ENCODE measurements at regions of chr18 and their contacts with region 1.

Region 1: GRCh38 chr18:9614401-9615279 is at the start of gene PPP4R1:
- DNase-seq: peak; percentile 58 to 72
- ATAC-seq: peak; percentile 85 to 87
- H3K4me3 ChIP-seq: peak within 1 kb of the TSS; percentile 66 to 86 (median 76)
- H3K27ac ChIP-seq: peak within 1 kb of the TSS; percentile 84 to 91 (median 88)
- H3K4me1 ChIP-seq: peaks cover 17 to 20% of the 10 kb centered on the region in 2 donors
- H3K27me3 ChIP-seq: no peaks in the 10 kb centered on the region
- CTCF ChIP-seq: no peak
- POLR2A ChIP-seq: peak; percentile 31 to 47
- total RNA-seq, gene PPP4R1: 27.7 to 48.3 (median 32.0) TPM

Region 2: GRCh38 chr18:9474983-9475642 is 139.5 kb before region 1 on chr18 and contains the start of gene RALBP1:
- in situ Hi-C with region 1: no loop called
- intact Hi-C with region 1: loop called (anchors 5 kb)
- DNase-seq: peak; percentile 98 to 99
- ATAC-seq: peak; percentile 94 to 95
- H3K4me3 ChIP-seq: peak within 1 kb of the TSS; percentile 72 to 94 (median 88)
- H3K27ac ChIP-seq: peak within 1 kb of the TSS; percentile 84 to 98 (median 91)
- H3K4me1 ChIP-seq: peaks cover 13 to 21% of the 10 kb centered on the region in 2 donors
- H3K27me3 ChIP-seq: no peaks in the 10 kb centered on the region
- CTCF ChIP-seq: peak in 2 of 5 experiments; percentile 23 to 36
- POLR2A ChIP-seq: peak; percentile 74 to 94
- total RNA-seq, gene RALBP1: 41.5 to 108 (median 78.1) TPM

Region 3: GRCh38 chr18:9708057-9708433 is 93.4 kb after region 1 on chr18 and contains the start of gene RAB31:
- in situ Hi-C with region 1: no loop called
- intact Hi-C with region 1: loop called (anchors 5 kb)
- DNase-seq: peak in 1 of 2 donors; percentile 54
- ATAC-seq: peak; percentile 69 to 72
- H3K4me3 ChIP-seq: peak within 1 kb of the TSS; percentile 64 to 85 (median 71)
- H3K27ac ChIP-seq: peak within 1 kb of the TSS; percentile 63 to 85 (median 72)
- H3K4me1 ChIP-seq: peaks cover 8 to 9% of the 10 kb centered on the region in 2 donors
- H3K27me3 ChIP-seq: peaks cover 18 to 21% (median 18%) of the 10 kb centered on the region in 3 donors
- CTCF ChIP-seq: no peak
- POLR2A ChIP-seq: peak; percentile 44 to 58
- total RNA-seq, gene RAB31: 3.2 to 7.1 (median 4.4) TPM

Region 4: DNA sequence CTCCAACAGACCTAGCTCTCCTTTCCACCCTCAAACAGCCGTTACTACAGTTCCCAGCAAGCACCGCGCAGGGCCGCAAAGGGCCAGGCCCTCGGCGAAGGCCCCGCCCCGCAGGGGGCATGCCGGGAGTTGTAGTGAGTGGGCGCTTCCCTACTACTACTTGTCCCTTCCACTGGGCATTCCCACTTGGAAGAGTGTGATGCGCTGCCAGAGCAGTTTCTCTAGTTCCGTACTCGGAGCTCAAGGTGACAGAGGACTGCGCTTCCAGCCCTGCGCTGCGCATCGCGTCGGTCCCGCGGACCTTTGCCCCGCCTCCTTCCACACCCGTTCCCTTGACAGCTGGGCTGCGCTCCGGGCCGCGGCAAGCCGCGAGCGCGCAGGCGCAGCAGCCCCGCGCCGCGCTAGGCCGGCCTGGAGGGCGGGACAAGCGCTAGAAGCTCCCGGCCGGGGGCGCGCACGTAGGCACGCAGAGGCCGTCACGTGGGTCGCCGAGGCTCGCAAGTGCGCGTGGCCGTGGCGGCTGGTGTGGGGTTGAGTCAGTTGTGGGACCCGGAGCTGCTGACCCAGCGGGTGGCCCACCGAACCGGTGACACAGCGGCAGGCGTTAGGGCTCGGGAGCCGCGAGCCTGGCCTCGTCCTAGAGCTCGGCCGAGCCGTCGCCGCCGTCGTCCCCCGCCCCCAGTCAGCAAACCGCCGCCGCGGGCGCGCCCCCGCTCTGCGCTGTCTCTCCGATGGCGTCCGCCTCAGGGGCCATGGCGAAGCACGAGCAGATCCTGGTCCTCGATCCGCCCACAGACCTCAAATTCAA is 299.1 kb after region 1 on chr18 and contains the start of gene VAPA:
- in situ Hi-C with region 1: no loop called
- intact Hi-C with region 1: loop called (anchors 2 kb)
- DNase-seq: peak; percentile 91 to 94
- ATAC-seq: peak; percentile 84 to 87
- H3K4me3 ChIP-seq: peak within 1 kb of the TSS; percentile 68 to 95 (median 85)
- H3K27ac ChIP-seq: peak within 1 kb of the TSS; percentile 92 to 99 (median 97)
- H3K4me1 ChIP-seq: peaks cover 38 to 40% of the 10 kb centered on the region in 2 donors
- H3K27me3 ChIP-seq: no peaks in the 10 kb centered on the region
- CTCF ChIP-seq: no peak
- POLR2A ChIP-seq: peak; percentile 99
- total RNA-seq, gene VAPA: 227 to 320 (median 243) TPM